BJ (cell line): ENCODE measurements at regions of chr3 and their contacts with region 1.

Region 1: GRCh38 chr3:187705164-187705563 is 2.8 kb upstream of the RTP2 start:
- DNase-seq: no peak
- H3K4me3 ChIP-seq: no peak overlapping the region
- H3K27me3 ChIP-seq: peaks cover 1% of the 10 kb centered on the region
- CTCF ChIP-seq: no peak

Region 2: DNA sequence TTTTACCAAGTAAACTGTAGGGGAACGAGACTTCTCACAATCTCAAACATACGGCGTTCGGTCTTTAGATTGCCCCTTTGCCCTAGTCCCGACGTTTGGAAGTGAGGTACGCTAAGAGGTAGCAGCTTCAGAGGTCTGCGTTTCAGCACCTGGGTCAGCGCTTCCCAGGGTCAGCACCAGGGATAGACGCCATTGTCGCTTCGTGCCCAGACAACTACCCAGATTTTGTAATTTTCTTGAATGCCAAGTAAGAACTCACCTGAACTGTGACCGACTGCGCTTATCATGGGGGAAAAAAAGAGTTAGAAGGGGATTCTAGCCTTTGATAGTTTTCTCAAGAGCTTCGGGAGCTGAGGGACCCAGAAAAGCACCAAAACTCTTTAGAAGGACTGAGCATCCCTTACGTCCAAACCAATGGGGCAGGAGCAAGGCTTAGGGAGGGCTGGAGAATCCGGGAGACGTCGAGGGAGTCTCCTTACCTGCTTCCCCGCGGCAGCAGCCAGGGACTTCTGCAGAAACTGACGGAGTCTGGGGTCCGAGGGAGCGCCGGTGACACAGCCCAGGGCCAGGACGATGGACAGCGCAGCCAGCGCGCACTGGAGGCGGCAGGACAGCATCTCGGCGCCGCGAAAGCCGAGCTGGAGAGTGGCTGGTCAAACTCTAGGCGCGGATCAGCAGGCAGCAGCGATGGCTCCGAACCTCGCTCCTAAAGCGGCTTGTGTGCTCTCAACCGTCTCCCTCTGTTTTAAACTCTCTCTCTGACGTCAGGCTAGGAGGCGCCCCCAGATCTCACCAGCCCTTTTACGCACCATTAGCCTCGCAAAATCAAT is 35.3 kb before region 1 on chr3 and contains the start of gene SST:
- CTCF ChIA-PET with region 1: no interaction called
- POLR2A ChIA-PET with region 1: no interaction called
- DNase-seq: no peak
- H3K4me3 ChIP-seq: no peak within 1 kb of the TSS
- H3K27me3 ChIP-seq: peaks cover 3% of the 10 kb centered on the region
- CTCF ChIP-seq: no peak
- polyA plus RNA-seq, gene SST: 0.15 and 0.25 TPM in 2 replicates

Region 3: GRCh38 chr3:187719628-187720336 is 14.6 kb after region 1 on chr3:
- CTCF ChIA-PET with region 1: interaction called, 62 read pairs
- POLR2A ChIA-PET with region 1: no interaction called
- DNase-seq: no peak
- H3K4me3 ChIP-seq: no peak overlapping the region
- H3K27me3 ChIP-seq: no peaks in the 10 kb centered on the region
- CTCF ChIP-seq: no peak